ENCODE measurements at regions of chr6 and their contacts with region 1.

Region 1: DNA sequence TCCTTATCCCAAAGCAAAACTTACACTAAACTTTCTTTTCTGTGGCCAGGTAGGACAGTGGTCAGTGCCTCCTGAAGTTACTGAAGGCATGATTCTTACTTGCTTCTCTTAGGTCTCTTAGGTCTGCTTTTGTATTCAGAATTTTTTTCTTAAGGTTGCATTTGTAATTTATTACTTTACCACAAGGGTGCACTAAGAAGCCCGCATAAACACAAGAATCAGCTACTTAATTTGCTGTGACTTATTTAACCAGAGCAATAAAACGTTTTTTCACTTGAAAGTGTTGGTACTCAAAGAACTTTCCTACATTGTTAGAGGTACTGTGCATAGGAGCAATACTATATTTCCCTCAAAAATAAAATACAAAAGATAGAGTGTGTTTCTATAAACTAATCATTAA is 75.4 kb upstream of the LAMA2 start:
- DNase-seq: peak; percentile 8
- ATAC-seq: no peak
- H3K4me3 ChIP-seq: no peak overlapping the region
- H3K27ac ChIP-seq: no peak overlapping the region
- H3K4me1 ChIP-seq: no peaks in the 10 kb centered on the region
- H3K27me3 ChIP-seq: no peaks in the 10 kb centered on the region
- CTCF ChIP-seq: peak; percentile 64; the same call in 1 of the 2 replicates

Region 2: DNA sequence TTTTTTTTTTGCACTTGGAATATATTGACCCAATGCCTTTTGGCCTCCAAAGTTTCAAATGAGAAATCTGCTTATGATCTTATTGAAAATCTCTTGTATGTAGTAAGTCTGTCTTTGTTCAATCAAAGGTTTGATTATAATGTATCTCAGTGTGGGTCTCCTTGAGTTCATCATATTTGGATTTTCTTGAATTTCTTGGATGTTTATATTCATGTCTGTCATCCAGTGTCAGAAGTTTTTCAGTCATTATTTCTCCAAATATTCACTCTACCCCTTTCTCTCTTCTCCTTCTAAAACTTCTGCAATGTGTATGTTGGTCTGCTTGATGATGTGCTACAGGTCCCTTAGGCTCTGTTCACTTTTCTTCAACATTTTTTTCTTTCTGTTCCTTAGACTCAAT is 191.2 kb before region 1 on chr6:
- CTCF ChIA-PET with region 1: no interaction called
- POLR2A ChIA-PET with region 1: no interaction called
- in situ Hi-C with region 1: no loop called
- intact Hi-C with region 1: no loop called
- DNase-seq: no peak
- ATAC-seq: no peak
- H3K4me3 ChIP-seq: no peak overlapping the region
- H3K27ac ChIP-seq: no peak overlapping the region
- H3K4me1 ChIP-seq: no peaks in the 10 kb centered on the region
- H3K27me3 ChIP-seq: no peaks in the 10 kb centered on the region
- CTCF ChIP-seq: no peak

Region 3: DNA sequence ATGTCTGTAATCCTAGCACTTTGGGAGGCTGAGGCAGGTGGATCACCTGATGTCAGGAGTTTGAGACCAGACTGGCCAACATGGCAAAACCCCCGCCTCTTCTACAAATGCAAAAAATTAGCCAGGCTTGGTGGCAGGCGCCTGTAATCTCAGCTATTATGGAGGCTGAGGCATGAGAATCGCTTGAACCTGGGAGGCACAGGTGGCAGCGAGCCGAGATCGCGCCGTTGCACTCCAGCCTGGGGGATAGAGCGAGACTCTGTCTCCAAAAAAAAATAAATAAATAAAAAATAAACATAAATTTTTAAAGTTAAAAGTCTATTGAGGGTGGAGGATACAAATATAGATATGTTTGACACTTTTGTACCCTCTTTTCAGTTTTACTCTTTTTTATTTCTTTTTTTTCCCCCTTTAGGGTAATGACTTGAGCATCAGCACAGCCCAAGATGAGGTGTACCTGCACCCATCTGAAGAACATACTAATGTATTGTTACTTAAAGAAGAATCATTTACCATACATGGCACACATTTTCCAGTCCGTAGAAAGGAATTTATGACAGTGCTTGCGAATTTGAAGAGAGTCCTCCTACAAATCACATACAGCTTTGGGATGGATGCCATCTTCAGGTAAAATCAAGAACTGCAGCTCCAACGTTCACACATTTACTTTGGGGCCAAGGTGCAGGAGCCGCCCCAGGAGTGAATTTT is 444.2 kb after region 1 on chr6:
- CTCF ChIA-PET with region 1: no interaction called
- POLR2A ChIA-PET with region 1: no interaction called
- in situ Hi-C with region 1: no loop called
- intact Hi-C with region 1: loop called (anchors 5 kb)
- DNase-seq: peak; percentile 53
- ATAC-seq: peak; percentile 74; the same call in 1 of the 2 replicates
- H3K4me3 ChIP-seq: no peak overlapping the region
- H3K27ac ChIP-seq: no peak overlapping the region
- H3K4me1 ChIP-seq: peaks cover 5% of the 10 kb centered on the region; the same call in 1 of the 2 replicates
- H3K27me3 ChIP-seq: no peaks in the 10 kb centered on the region
- CTCF ChIP-seq: peak; percentile 90

Region 4: DNA sequence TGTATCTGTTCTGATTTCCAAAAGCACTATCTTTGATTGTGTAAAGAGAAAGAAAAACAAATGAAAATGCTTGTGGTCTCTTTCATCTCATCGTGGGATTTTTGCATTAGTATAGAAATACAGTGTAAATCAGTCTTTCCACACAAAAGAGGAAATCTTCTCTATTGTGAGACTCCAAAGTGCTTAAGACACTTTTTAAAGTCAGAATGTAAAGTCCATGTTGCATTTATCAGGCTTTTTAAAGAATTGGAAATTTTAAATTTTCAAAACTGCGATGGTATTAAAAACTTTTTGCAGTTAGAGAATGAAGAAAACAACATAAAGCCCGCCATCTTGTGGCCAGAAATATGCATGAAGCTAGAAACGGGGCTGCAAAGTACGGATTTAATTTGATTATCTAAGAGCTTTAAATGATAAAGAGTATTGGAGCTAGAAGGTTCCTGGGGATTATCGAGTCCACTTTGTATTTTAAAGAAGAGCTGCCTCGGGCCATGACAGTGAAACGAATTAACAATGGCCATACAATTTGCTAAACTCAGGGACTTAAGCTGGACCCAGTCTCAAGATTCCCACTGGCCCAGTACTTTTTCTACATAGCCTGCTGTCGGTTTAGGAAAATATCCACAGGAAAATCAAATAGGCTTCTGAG is 562.8 kb after region 1 on chr6:
- CTCF ChIA-PET with region 1: no interaction called
- POLR2A ChIA-PET with region 1: no interaction called
- in situ Hi-C with region 1: no loop called
- intact Hi-C with region 1: loop called (anchors 5 kb)
- DNase-seq: peak; percentile 20
- ATAC-seq: peak; percentile 65; the same call in 1 of the 2 replicates
- H3K4me3 ChIP-seq: no peak overlapping the region
- H3K27ac ChIP-seq: peak overlapping the region; percentile 74; the same call in 1 of the 2 replicates
- H3K4me1 ChIP-seq: peaks cover 16% of the 10 kb centered on the region; the same call in 1 of the 2 replicates
- H3K27me3 ChIP-seq: no peaks in the 10 kb centered on the region
- CTCF ChIP-seq: peak; percentile 74